Heart left ventricle (tissue), 16 donors: ENCODE measurements at regions of chr5 and their contacts with region 1.

Region 1: GRCh38 chr5:90606539-90606938 is 47.9 kb downstream of the ADGRV1 start:
- DNase-seq: no peak
- ATAC-seq: no peak
- H3K4me3 ChIP-seq: no peak overlapping the region
- H3K27ac ChIP-seq: no peak overlapping the region
- H3K4me1 ChIP-seq: no peaks in the 10 kb centered on the region
- H3K27me3 ChIP-seq: peaks cover 0 to 9% (median 0%) of the 10 kb centered on the region in 9 donors
- CTCF ChIP-seq: peak in 1 of 12 donors; percentile 14
- POLR2A ChIP-seq: no peak

Region 2: GRCh38 chr5:90434116-90434714 is 172.3 kb before region 1 on chr5:
- intact Hi-C with region 1: loop called in 5 of 10 experiments (anchors 5 to 10 kb)
- DNase-seq: peak in 2 of 5 donors; percentile 22 to 31
- ATAC-seq: peak in 1 of 4 donors; percentile 59
- H3K4me3 ChIP-seq: no peak overlapping the region
- H3K27ac ChIP-seq: no peak overlapping the region
- H3K4me1 ChIP-seq: peaks cover 0 to 4% (median 0%) of the 10 kb centered on the region in 12 donors
- H3K27me3 ChIP-seq: no peaks in the 10 kb centered on the region
- CTCF ChIP-seq: peak; percentile 34 to 65 (median 52)
- POLR2A ChIP-seq: no peak

Region 3: GRCh38 chr5:90440644-90441043 is 165.9 kb before region 1 on chr5:
- intact Hi-C with region 1: loop called in 6 of 10 experiments (anchors 5 to 10 kb)
- DNase-seq: no peak
- ATAC-seq: no peak
- H3K4me3 ChIP-seq: no peak overlapping the region
- H3K27ac ChIP-seq: no peak overlapping the region
- H3K4me1 ChIP-seq: peaks cover 0 to 6% (median 0%) of the 10 kb centered on the region in 12 donors
- H3K27me3 ChIP-seq: no peaks in the 10 kb centered on the region
- CTCF ChIP-seq: no peak
- POLR2A ChIP-seq: no peak